ENCODE measurements at regions of chr11 and their contacts with region 1.

Region 1: GRCh38 chr11:112074026-112074811 is at the start of gene NKAPD1:
- DNase-seq: peak; percentile 86
- ATAC-seq: peak; percentile 92
- H3K4me3 Mint-ChIP-seq: peak within 1 kb of the TSS; percentile 94
- H3K27ac Mint-ChIP-seq: peak within 1 kb of the TSS; percentile 93
- H3K4me1 Mint-ChIP-seq: peaks cover 26% of the 10 kb centered on the region
- H3K27me3 Mint-ChIP-seq: peaks cover 11% of the 10 kb centered on the region
- total RNA-seq, gene NKAPD1: 23.7 to 45.3 TPM

Region 2: DNA sequence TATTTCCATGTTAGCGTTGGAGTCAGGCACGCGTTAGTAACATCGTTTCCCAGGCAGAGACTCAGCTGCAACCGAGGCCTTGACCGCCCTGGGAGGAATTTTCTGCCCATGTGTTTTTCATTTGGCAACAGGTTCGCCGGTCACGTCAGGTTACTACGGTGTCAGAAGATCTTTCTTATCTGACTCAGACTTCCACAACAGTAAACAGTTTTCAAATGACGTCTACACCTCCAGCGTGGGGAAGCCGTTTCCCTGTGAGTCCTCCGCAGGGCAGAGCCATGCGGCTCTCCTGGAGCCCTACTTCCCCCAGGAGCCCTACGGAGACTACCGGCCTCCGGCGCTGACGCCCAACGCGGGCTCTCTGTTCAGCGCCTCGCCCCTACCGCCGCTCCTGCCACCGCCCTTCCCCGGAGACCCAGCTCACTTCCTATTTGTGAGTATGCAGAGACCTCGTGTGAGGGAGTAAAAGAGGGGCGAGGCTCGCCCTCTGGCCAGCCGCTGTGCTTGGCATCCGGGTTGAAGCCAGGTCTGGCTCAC is 790.2 kb before region 1 on chr11:
- CTCF ChIA-PET with region 1: no interaction called
- POLR2A ChIA-PET with region 1: no interaction called
- intact Hi-C with region 1: no loop called
- DNase-seq: no peak
- ATAC-seq: no peak
- H3K4me3 Mint-ChIP-seq: no peak overlapping the region
- H3K27ac Mint-ChIP-seq: no peak overlapping the region
- H3K4me1 Mint-ChIP-seq: peaks cover 3% of the 10 kb centered on the region
- H3K27me3 Mint-ChIP-seq: no peaks in the 10 kb centered on the region

Region 3: DNA sequence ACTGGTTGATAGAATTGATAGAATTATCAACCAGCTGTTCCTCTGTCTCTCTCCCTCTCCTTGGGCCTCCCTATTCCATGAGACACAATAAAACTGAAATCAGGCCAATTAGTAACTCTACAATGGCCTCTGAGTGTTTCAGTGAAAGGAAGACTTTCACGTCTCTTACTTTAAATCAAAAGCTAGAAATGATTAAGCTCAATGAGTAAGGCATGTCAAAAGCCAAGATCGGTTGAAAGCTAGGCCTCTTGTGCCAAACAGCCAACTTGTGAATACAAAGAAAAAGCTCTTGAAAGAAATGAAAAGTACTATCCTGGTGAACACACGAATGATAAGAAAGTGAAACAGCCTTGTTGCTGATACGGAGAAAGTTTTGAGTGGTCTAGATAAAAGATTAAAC is 17.0 kb before region 1 on chr11:
- CTCF ChIA-PET with region 1: interaction called, 5 read pairs
- POLR2A ChIA-PET with region 1: no interaction called
- intact Hi-C with region 1: loop called in 1 of 2 experiments (anchors 1 kb)
- DNase-seq: peak; percentile 34
- ATAC-seq: peak; percentile 91
- H3K4me3 Mint-ChIP-seq: peak overlapping the region; percentile 2
- H3K27ac Mint-ChIP-seq: peak overlapping the region; percentile 81
- H3K4me1 Mint-ChIP-seq: peaks cover 19% of the 10 kb centered on the region
- H3K27me3 Mint-ChIP-seq: no peaks in the 10 kb centered on the region